Right cardiac atrium (tissue), 5 donors: ENCODE measurements at regions of chr3 and their contacts with region 1.

Region 1: DNA sequence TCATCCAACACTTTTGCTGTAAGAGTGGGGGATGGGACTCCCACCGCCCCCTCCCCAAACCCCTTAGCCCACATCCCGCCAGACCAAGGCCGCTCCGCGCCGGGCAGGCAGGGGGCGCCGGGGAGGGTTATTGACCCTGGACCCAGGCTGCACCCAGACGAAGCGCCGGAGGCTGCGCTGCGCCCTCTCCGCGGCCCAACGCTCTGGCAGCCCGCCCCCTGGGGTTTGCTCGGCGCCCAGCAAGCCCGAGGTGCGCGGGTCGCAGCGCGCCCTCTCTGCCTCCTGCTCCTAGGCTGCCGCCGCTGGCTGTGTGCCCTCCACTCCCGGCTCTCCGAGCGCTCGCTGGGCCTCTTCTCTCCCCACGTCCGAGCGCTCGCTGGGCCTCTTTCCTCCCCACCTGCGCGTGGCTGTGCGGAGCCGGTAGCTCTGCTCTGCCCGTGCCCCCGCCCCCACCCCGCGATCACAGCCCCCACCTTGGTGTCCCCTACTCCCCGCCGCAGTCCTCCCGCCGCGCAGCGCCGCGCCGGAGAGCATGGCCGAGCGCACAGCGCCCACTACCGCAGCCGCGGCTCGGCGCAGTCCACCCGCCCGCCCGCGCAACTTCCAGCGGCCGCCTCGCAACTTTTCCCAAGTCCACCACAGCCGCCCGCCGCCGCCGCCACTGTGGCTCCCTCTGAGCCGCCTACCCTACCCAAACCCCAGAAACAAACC is 1.2 kb downstream of the MECOM start:
- DNase-seq: peak; percentile 76 to 92 (median 92)
- ATAC-seq: peak; percentile 86 to 88
- H3K4me3 ChIP-seq: peak overlapping the region; percentile 94
- H3K27ac ChIP-seq: peak overlapping the region; percentile 84
- H3K4me1 ChIP-seq: no peaks in the 10 kb centered on the region
- H3K27me3 ChIP-seq: no peaks in the 10 kb centered on the region

Region 2: DNA sequence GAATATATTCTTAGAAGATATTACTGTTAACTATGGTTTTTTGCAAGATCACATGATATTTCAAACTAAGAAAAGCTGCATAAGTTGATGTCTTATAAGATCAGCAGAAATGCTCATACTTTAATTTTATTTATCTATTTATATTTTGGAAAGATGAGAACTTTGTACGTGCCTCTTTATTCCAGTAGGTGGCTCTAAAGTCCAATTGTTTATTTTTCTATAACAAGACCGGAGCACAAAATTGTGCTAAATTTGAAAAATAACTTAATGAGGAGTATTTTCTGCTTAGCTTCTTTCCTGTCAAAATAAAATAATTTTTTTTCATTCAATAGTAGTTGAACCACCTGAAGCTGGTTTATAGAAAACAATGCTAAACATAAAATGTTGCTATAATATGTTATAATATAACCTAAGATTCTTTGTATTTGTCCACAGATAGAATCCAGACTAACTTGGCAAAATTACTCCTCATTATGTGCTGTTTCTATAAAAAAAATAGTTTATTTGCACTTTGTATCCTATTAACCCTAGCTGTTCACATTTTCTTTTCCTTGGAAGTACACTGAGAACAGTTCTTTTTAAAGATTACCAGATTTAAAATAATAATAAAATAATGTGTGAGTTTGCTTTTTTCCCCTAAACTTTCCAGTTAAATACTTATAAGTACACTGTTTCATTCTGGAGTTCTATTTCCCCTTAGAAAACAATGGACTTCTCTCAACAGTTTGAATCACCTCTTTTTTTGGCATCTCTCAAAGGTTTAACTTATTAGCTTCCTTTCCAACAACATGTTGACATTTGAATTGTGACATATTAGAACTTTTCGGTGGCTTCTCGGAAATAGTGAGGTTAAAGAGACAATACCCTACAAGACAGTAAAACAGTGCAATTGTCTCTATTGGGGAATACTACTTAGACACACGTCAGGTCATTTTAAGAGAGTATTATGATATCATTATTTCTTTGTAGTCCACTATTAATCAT is 528.8 kb before region 1 on chr3:
- intact Hi-C with region 1: loop called in 1 of 4 experiments (anchors 5 kb)
- DNase-seq: no peak
- ATAC-seq: peak in 1 of 2 donors; percentile 73
- H3K4me3 ChIP-seq: no peak overlapping the region
- H3K27ac ChIP-seq: no peak overlapping the region
- H3K4me1 ChIP-seq: no peaks in the 10 kb centered on the region
- H3K27me3 ChIP-seq: no peaks in the 10 kb centered on the region

Region 3: GRCh38 chr3:169149349-169149890 is 512.9 kb before region 1 on chr3:
- intact Hi-C with region 1: loop called (anchors 5 to 10 kb)
- DNase-seq: peak; percentile 86 to 94 (median 93)
- ATAC-seq: peak; percentile 84
- H3K4me3 ChIP-seq: peak overlapping the region; percentile 36
- H3K27ac ChIP-seq: peak overlapping the region; percentile 93
- H3K4me1 ChIP-seq: no peaks in the 10 kb centered on the region
- H3K27me3 ChIP-seq: no peaks in the 10 kb centered on the region